Pancreas (tissue), 10 donors: ENCODE measurements at regions of chr9 and their contacts with region 1.

Region 1: GRCh38 chr9:18255158-18255629 is 218.8 kb upstream of the ADAMTSL1 start:
- DNase-seq: peak; percentile 39 to 91 (median 72)
- ATAC-seq: peak; percentile 68 to 94 (median 91)
- H3K4me3 ChIP-seq: no peak overlapping the region
- H3K27ac ChIP-seq: no peak overlapping the region
- H3K4me1 ChIP-seq: no peaks in the 10 kb centered on the region
- H3K27me3 ChIP-seq: no peaks in the 10 kb centered on the region
- CTCF ChIP-seq: peak; percentile 84 to 95 (median 87)

Region 2: DNA sequence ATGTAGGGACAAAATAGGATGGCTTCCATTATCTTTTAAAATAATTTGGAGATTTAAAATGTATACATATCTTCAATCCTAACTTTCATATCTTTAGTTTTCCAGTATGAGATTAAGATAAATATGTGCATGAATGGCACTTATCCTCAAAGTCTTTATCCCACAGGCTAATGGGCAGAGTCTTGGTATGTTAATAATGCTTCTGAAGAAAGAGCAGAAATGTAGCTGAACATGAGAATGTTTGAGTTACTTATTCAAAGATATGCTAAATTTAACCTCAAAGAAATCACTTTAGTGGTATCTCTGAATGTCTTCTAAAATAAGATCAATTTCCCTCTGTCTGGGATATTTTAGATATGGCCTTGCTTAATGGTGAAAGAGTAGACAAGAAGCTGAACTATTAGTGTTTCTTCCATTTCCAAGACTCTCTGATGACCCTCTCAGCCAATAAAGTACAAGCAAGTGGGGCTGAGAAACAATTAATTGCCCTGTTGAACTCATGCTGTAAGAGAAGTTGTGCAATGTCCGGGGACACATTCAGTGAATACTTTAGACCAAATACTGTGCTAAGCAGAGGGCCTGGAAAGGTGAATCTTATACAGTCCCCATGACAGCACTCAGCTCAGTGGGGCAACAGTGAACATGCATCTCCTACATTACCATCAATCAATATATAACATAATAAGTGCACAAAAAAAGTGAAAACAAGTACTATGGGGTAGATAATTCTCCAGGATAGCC is 168.8 kb after region 1 on chr9:
- intact Hi-C with region 1: no loop called
- DNase-seq: no peak
- ATAC-seq: no peak
- H3K4me3 ChIP-seq: no peak overlapping the region
- H3K27ac ChIP-seq: no peak overlapping the region
- H3K4me1 ChIP-seq: no peaks in the 10 kb centered on the region
- H3K27me3 ChIP-seq: no peaks in the 10 kb centered on the region
- CTCF ChIP-seq: no peak

Region 3: GRCh38 chr9:18438300-18438925 is 183.2 kb after region 1 on chr9:
- intact Hi-C with region 1: loop called in 1 of 3 experiments (anchors 10 kb)
- DNase-seq: peak in 3 of 6 donors; percentile 17 to 68 (median 35)
- ATAC-seq: peak in 3 of 4 donors; percentile 64
- H3K4me3 ChIP-seq: peak overlapping the region in 3 of 4 donors; percentile 11 to 31 (median 14)
- H3K27ac ChIP-seq: peak overlapping the region in 1 of 4 donors; percentile 39
- H3K4me1 ChIP-seq: peaks cover 0 to 4% (median 3%) of the 10 kb centered on the region in 3 donors
- H3K27me3 ChIP-seq: no peaks in the 10 kb centered on the region
- CTCF ChIP-seq: no peak

Region 4: DNA sequence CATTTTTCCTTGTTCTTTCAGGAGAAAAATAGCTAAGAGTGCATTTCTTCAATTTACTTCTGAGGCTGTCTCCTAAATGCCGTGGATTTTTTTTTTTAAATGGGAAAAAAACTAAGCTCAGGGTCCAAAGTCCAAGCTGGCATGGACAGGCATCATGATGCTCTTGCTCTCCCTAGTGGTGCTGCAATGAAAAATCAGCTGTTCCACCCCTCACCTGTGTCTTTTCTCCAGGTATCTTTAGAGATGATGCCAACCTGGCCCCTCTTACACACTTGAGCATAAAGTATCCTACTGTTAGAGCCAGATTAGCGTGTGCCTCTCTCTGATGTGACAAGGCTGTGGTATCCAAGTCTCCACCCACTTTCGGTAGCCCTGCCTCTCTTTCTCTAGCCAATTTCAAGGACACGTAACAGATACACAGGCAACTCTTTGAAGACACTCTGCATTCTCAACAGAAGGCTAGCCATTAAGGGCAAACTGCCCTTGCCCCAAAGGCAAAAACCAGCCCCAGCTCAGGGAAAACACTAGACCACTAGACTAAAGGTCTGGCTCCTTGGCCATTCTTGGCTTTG is 569.0 kb after region 1 on chr9:
- intact Hi-C with region 1: loop called in 1 of 3 experiments (anchors 10 kb)
- DNase-seq: peak in 3 of 6 donors; percentile 20 to 40 (median 38)
- ATAC-seq: peak; percentile 77 to 92 (median 90)
- H3K4me3 ChIP-seq: no peak overlapping the region
- H3K27ac ChIP-seq: no peak overlapping the region
- H3K4me1 ChIP-seq: no peaks in the 10 kb centered on the region
- H3K27me3 ChIP-seq: no peaks in the 10 kb centered on the region
- CTCF ChIP-seq: peak in 2 of 4 donors; percentile 28 to 46

Region 5: DNA sequence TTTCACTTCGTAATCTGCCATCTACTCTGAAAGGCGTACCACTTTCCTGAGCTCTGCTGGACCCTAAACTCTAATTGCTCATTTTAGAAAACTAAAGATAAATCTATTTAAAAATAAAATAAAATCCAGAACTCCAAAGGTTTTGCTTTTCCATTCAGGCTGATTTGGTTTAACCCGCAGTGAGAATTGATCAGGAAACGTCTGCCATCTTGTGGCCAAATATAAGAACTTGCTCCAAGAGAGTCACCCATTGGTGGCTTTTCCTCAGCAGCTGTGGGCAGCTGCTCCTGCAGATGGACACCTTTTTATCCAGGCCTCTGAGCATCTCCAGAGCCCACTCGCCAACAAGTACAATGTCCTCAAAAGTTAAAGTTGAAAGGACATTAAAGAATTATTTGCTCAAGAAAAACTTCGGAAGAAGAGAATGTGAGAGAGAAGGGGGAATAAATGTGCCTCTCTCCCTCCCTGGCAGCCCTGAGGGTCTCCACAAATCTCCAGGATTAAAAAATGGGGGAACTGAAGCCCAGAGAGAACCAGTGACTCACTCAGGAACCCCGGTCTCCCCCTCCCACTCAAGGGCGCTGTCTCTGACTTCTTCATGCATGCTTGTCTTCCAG is 773.7 kb after region 1 on chr9:
- intact Hi-C with region 1: loop called in 2 of 3 experiments (anchors 10 kb)
- DNase-seq: peak in 3 of 6 donors; percentile 27 to 52 (median 30)
- ATAC-seq: peak; percentile 67 to 92 (median 91)
- H3K4me3 ChIP-seq: no peak overlapping the region
- H3K27ac ChIP-seq: no peak overlapping the region
- H3K4me1 ChIP-seq: no peaks in the 10 kb centered on the region
- H3K27me3 ChIP-seq: no peaks in the 10 kb centered on the region
- CTCF ChIP-seq: peak; percentile 62 to 77 (median 69)